ENCODE measurements at regions of chr16 and their contacts with region 1.

Region 1: DNA sequence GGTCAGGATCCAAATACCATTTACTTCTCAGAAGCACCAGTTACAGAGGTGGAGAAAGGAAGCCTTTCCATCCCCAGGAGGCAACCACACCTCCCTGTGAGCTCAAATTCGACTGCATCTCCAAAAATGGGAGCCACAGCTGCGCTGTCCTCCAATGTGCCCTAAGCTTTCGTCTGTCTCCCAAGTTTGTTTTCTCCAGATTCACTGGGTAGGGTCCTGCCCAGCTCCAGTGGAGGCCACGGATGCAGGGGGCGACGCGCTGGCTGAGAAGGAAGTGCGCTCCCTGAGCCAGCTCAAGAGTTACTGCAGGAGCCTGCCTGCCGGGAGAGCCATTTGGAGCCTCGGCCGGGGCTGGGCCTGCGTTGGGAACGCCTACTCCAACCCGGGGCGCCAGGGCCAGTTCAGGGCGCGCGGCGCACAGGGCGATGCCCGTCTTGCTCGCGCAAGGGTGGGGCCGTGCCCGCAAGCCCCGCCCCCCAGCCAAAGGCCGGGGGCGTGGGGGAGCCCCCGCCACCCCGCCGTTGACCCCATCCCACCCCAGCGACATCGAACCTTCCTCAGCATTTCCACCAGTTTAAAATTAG is 19.5 kb downstream of the SIAH1 start:
- DNase-seq: peak; percentile 49 to 86 (median 68)
- ATAC-seq: peak; percentile 82
- H3K4me3 ChIP-seq: peak overlapping the region; percentile 67
- H3K4me3 Mint-ChIP-seq: peak overlapping the region; percentile 100
- H3K27ac ChIP-seq: peak overlapping the region; percentile 81
- H3K27ac Mint-ChIP-seq: peak overlapping the region; percentile 98
- H3K4me1 ChIP-seq: peaks cover 17% of the 10 kb centered on the region
- H3K4me1 Mint-ChIP-seq: peaks cover 55% of the 10 kb centered on the region
- H3K27me3 ChIP-seq: no peaks in the 10 kb centered on the region
- H3K27me3 Mint-ChIP-seq: no peaks in the 10 kb centered on the region
- CTCF ChIP-seq: no peak

Region 2: GRCh38 chr16:48318630-48319029 is 47.0 kb before region 1 on chr16:
- CTCF ChIA-PET with region 1: interaction called, 3 read pairs
- POLR2A ChIA-PET with region 1: interaction called, 13 read pairs
- intact Hi-C with region 1: no loop called
- DNase-seq: peak in 12 of 14 experiments; percentile 4 to 82 (median 28)
- ATAC-seq: peak; percentile 96
- H3K4me3 ChIP-seq: peak overlapping the region; percentile 28
- H3K4me3 Mint-ChIP-seq: peak overlapping the region; percentile 77
- H3K27ac ChIP-seq: peak overlapping the region in 1 of 2 donors; percentile 41
- H3K27ac Mint-ChIP-seq: peak overlapping the region; percentile 89
- H3K4me1 ChIP-seq: peaks cover 24% of the 10 kb centered on the region
- H3K4me1 Mint-ChIP-seq: peaks cover 70% of the 10 kb centered on the region
- H3K27me3 ChIP-seq: no peaks in the 10 kb centered on the region
- H3K27me3 Mint-ChIP-seq: no peaks in the 10 kb centered on the region
- CTCF ChIP-seq: no peak

Region 3: DNA sequence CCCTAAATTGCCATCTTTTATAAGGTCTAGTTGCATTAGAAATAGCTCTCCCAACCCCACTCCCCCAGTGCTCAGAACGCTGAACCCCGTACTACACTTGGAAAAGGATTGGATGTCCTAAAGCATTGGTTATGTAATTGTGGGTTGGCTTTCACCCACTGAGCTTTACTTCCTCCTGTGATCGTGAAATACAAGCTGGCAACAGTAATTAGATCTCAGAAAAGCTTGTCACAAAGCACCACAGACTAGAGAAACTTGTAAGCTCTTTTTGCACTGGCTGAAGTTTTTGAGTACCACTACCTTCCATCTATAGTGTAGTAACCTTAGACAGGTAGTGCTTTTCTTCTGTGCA is 34.9 kb before region 1 on chr16:
- CTCF ChIA-PET with region 1: no interaction called
- POLR2A ChIA-PET with region 1: no interaction called
- intact Hi-C with region 1: no loop called
- DNase-seq: no peak
- ATAC-seq: no peak
- H3K4me3 ChIP-seq: no peak overlapping the region
- H3K4me3 Mint-ChIP-seq: no peak overlapping the region
- H3K27ac ChIP-seq: no peak overlapping the region
- H3K27ac Mint-ChIP-seq: peak overlapping the region; percentile 43
- H3K4me1 ChIP-seq: no peaks in the 10 kb centered on the region
- H3K4me1 Mint-ChIP-seq: peaks cover 32% of the 10 kb centered on the region
- H3K27me3 ChIP-seq: no peaks in the 10 kb centered on the region
- H3K27me3 Mint-ChIP-seq: no peaks in the 10 kb centered on the region
- CTCF ChIP-seq: no peak

Region 4: GRCh38 chr16:48353565-48354163 is 12.0 kb before region 1 on chr16:
- CTCF ChIA-PET with region 1: interaction called, 7 read pairs
- POLR2A ChIA-PET with region 1: interaction called, 10 read pairs
- intact Hi-C with region 1: loop called in 1 of 2 experiments (anchors 1 kb)
- DNase-seq: peak; percentile 47 to 90 (median 59)
- ATAC-seq: peak; percentile 98
- H3K4me3 ChIP-seq: no peak overlapping the region
- H3K4me3 Mint-ChIP-seq: no peak overlapping the region
- H3K27ac ChIP-seq: no peak overlapping the region
- H3K27ac Mint-ChIP-seq: peak overlapping the region; percentile 67
- H3K4me1 ChIP-seq: peaks cover 2% of the 10 kb centered on the region
- H3K4me1 Mint-ChIP-seq: peaks cover 12% of the 10 kb centered on the region
- H3K27me3 ChIP-seq: no peaks in the 10 kb centered on the region
- H3K27me3 Mint-ChIP-seq: no peaks in the 10 kb centered on the region
- CTCF ChIP-seq: peak; percentile 85

Region 5: DNA sequence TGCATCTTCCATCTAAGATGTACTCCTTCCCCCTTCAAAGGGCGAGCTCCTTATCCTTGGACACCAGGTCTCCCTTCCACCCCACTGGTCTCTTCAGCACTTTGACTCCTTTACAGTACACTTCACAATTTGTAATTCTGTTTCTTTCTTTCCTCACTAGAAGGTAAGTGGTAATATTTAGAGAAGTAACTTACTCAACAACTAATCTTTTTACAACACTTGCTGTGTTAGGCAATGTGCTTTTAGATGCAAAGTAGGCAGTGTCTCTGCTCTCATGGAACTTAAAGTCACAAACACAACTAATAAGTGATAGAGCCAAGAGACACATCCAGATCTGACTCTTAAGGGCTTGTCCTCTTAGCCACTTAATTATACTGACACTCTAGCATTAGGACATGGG is 13.2 kb after region 1 on chr16:
- CTCF ChIA-PET with region 1: interaction called, 6 read pairs
- POLR2A ChIA-PET with region 1: interaction called, 118 read pairs
- intact Hi-C with region 1: loop called (anchors 2 kb)
- DNase-seq: no peak
- ATAC-seq: no peak
- H3K4me3 ChIP-seq: no peak overlapping the region
- H3K4me3 Mint-ChIP-seq: peak overlapping the region; percentile 7
- H3K27ac ChIP-seq: no peak overlapping the region
- H3K27ac Mint-ChIP-seq: peak overlapping the region; percentile 1
- H3K4me1 ChIP-seq: peaks cover 10% of the 10 kb centered on the region
- H3K4me1 Mint-ChIP-seq: peaks cover 53% of the 10 kb centered on the region
- H3K27me3 ChIP-seq: no peaks in the 10 kb centered on the region
- H3K27me3 Mint-ChIP-seq: no peaks in the 10 kb centered on the region
- CTCF ChIP-seq: no peak

Region 6: DNA sequence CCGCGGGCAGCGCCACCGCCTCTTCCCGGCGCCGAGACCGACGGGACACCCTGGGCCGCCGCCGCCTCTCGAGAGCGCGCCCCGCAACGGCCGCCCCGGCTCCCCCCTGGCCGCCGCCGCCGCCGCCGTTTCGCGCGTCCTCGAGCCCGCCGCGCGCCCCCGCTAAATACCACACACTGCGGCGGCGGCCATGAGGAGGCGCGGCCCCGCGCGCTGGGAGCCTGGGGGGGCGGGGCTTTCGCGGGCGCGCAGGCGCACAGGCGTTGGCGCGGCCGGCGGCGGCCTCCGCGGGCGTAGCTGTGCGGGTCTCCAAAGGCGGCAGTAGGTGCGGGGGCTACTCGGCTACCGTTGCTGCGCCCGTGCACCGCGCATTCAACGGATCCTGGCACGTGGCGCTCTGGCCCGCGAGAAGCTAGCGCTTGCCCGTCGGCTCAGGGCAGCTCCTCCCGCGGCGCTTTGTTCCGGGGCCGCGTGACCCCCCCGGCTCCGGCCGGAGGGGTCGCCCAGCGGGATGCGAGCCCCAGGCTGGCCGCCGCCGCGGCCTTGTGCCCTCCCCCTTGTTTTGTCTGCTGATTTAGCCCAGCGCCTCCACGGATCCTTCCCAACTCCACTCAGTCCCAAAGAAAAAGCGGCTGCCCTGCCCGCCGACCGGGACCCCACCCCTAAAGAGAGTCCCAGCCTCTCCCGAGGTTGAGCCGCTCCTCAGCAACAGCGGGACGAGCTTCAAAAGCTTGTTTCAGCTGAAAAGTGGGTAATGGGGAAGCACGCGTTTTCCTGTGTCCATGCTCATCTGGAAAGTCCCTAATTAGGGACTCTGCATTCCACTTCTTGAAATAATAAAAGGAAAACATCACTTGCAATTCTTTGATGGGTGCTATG is 19.8 kb after region 1 on chr16 and contains the start of gene SIAH1:
- CTCF ChIA-PET with region 1: interaction called, 3 read pairs
- POLR2A ChIA-PET with region 1: interaction called, 118 read pairs
- intact Hi-C with region 1: loop called (anchors 2 kb)
- DNase-seq: peak; percentile 73 to 96 (median 86)
- ATAC-seq: peak; percentile 80
- H3K4me3 ChIP-seq: peak within 1 kb of the TSS; percentile 81
- H3K4me3 Mint-ChIP-seq: peak within 1 kb of the TSS; percentile 98
- H3K27ac ChIP-seq: peak within 1 kb of the TSS in 1 of 2 donors; percentile 46
- H3K27ac Mint-ChIP-seq: peak within 1 kb of the TSS; percentile 92
- H3K4me1 ChIP-seq: peaks cover 12% of the 10 kb centered on the region
- H3K4me1 Mint-ChIP-seq: peaks cover 27% of the 10 kb centered on the region
- H3K27me3 ChIP-seq: no peaks in the 10 kb centered on the region
- H3K27me3 Mint-ChIP-seq: no peaks in the 10 kb centered on the region
- CTCF ChIP-seq: no peak
- total RNA-seq, gene SIAH1: 40.9 to 43.0 TPM

Region 7: DNA sequence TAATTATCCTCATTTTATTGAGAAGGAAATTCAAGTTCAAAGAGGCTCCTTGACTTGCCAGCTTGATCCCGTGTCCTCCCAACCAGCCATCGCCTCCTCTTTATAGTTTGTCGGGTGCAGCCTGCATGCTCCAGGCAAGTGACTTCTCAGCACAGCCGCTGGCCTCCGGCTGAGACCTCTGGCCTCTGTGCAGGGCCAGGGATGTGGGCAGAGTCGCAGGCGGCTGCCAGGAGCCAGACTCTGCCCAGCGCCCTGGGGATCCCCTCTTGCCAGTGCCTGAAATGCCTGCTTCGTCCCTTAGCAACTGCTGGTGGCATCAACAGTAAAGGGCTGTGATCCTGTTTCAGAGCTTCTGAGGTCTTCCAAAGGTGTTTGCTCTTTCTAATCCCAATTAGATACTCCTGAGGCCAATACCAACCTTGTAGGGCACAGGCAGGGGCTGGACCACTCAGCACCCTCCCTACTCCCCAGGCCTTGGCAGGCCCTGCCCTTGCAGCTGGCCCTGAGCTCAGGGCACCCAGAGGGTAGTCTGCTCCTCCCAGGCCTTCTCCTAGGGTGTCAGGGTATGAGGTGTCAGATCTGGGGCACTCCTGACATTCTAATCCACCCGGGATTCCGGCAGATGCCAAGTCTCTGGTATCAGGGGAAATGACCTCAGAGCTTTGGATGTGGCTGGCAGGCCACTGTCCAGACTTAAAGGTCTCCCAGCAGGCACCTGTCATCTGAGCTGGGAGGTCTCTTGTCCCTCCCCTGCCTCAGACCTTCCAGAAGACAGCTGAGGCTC is 87.5 kb after region 1 on chr16:
- CTCF ChIA-PET with region 1: no interaction called
- POLR2A ChIA-PET with region 1: no interaction called
- intact Hi-C with region 1: no loop called
- DNase-seq: no peak
- ATAC-seq: no peak
- H3K4me3 ChIP-seq: no peak overlapping the region
- H3K4me3 Mint-ChIP-seq: no peak overlapping the region
- H3K27ac ChIP-seq: no peak overlapping the region
- H3K27ac Mint-ChIP-seq: no peak overlapping the region
- H3K4me1 ChIP-seq: no peaks in the 10 kb centered on the region
- H3K4me1 Mint-ChIP-seq: no peaks in the 10 kb centered on the region
- H3K27me3 ChIP-seq: no peaks in the 10 kb centered on the region
- H3K27me3 Mint-ChIP-seq: no peaks in the 10 kb centered on the region
- CTCF ChIP-seq: no peak